GM13976 (cell line): ENCODE measurements at regions of chr1 and their contacts with region 1.

Region 1: DNA sequence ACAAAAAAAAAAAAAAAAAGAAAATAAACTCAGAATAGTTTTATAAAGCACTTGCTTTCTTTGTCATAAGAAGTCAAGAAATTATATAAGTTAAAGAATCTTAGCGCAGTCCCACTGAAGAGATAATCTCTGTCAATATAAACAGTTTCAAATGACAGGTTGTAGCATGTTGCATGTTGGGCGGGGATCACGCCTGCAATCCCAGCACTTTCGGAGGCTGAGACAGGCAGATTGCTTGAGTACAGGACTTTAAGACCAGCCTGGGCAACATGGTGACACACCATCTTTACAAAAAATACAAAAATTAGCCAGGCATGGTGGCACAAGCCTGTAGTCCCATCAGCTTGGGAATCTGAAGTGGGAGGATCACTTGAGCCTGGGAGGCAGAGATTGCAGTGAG is 18.4 kb upstream of the INPP5B start:
- DNase-seq: no peak
- CTCF ChIP-seq: no peak

Region 2: DNA sequence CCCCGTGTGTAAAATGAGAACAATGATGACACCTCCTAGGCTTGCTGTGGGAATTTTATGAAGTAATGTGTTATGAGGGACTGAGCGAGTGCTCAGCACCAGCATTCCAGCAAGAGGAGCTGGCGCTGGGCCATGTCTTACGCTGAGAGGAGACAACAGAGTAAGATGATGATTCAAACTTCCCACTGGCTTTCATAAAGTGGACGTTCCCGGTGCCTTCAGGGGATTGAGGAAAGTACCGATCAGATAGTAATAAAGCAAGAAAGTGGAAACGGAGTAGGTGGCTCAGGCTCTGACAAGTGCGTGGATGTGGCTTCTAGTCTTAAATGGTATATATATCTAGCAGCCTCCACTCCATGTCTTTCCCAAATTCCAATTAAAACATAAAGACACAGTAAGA is 224.2 kb before region 1 on chr1:
- in situ Hi-C with region 1: no loop called
- DNase-seq: no peak
- CTCF ChIP-seq: no peak

Region 3: GRCh38 chr1:37883671-37884070 is 81.6 kb before region 1 on chr1:
- in situ Hi-C with region 1: loop called (anchors 10 kb)
- DNase-seq: no peak
- CTCF ChIP-seq: no peak

Region 4: GRCh38 chr1:38191461-38191860 is 226.2 kb after region 1 on chr1:
- in situ Hi-C with region 1: no loop called
- DNase-seq: no peak
- CTCF ChIP-seq: no peak